ENCODE measurements at regions of chr19 and their contacts with region 1.

Region 1: DNA sequence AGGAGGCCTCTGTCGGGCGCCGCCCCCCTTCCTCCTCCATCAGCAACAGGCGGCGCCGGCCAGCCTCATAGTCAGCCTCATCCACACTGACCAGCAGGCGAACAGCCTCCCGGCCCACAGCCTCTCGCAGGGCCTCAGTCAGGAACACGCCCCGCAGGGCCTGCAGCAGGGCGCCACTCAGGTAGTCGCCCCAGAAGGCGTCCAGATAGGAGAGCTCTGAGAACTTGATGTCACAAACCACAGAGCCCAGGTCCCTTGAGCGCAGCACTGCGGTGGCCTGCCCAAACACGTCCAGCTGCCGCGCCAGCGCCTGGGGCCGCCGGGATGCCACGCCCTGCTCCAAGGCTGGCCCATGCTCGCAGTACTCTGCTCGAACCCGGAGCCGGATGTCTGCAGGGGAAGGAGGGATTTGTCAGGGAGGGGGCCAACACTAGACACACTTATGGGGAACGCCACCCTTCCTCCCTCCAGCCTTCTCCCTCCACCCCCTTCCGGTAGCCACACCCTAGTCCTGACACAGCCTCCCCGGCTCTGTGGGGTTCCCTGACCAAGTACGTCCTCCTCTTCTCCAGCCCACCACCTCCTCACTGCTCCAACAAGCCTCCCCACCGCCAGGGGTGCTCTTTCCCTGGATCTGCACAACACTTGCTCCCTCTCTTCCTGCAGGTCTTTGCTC is 17.9 kb downstream of the DEDD2 start:
- DNase-seq: peak in 10 of 14 experiments; percentile 28 to 89 (median 56)
- ATAC-seq: peak; percentile 47
- H3K4me3 ChIP-seq: peak overlapping the region; percentile 57
- H3K4me3 Mint-ChIP-seq: peak overlapping the region; percentile 83
- H3K27ac ChIP-seq: peak overlapping the region; percentile 89 to 94
- H3K27ac Mint-ChIP-seq: peak overlapping the region; percentile 93
- H3K4me1 ChIP-seq: peaks cover 95% of the 10 kb centered on the region
- H3K4me1 Mint-ChIP-seq: peaks cover 83% of the 10 kb centered on the region
- H3K27me3 ChIP-seq: no peaks in the 10 kb centered on the region
- H3K27me3 Mint-ChIP-seq: no peaks in the 10 kb centered on the region
- CTCF ChIP-seq: peak; percentile 10

Region 2: GRCh38 chr19:42176990-42177685 is 22.4 kb before region 1 on chr19:
- CTCF ChIA-PET with region 1: interaction called, 9 read pairs
- POLR2A ChIA-PET with region 1: interaction called, 19 read pairs
- intact Hi-C with region 1: no loop called
- DNase-seq: peak; percentile 61 to 91 (median 72)
- ATAC-seq: peak; percentile 95
- H3K4me3 ChIP-seq: peak overlapping the region; percentile 56
- H3K4me3 Mint-ChIP-seq: no peak overlapping the region
- H3K27ac ChIP-seq: no peak overlapping the region
- H3K27ac Mint-ChIP-seq: no peak overlapping the region
- H3K4me1 ChIP-seq: peaks cover 34% of the 10 kb centered on the region
- H3K4me1 Mint-ChIP-seq: peaks cover 25% of the 10 kb centered on the region
- H3K27me3 ChIP-seq: peaks cover 36 to 37% of the 10 kb centered on the region in 2 experiments
- H3K27me3 Mint-ChIP-seq: peaks cover 35% of the 10 kb centered on the region
- CTCF ChIP-seq: peak; percentile 35

Region 3: DNA sequence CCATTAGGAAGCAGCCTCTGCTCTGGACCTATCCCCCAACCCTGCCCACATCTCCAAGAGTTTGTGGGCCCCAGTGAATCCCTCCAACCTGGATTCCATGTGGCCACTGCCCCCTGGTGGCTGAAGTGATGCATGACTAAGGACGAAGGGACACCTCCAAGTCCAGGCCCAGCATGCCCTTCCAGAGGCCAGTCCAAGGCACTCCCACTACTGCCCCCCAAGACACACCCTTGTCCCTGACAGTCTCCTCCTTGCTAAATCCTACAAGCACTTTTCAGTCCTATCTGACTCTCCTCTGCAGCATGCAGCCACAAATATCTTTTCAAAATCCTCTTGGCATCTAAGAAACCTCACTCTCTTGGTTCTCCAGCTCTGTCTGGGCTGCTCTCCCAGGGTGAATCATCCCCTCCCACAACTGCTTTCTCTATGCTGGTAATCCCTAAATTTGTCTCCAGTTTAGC is 15.1 kb before region 1 on chr19:
- CTCF ChIA-PET with region 1: interaction called, 3 read pairs
- POLR2A ChIA-PET with region 1: interaction called, 18 read pairs
- intact Hi-C with region 1: loop called in 1 of 2 experiments (anchors 2 kb)
- DNase-seq: peak; percentile 51 to 82 (median 62)
- ATAC-seq: peak; percentile 62
- H3K4me3 ChIP-seq: no peak overlapping the region
- H3K4me3 Mint-ChIP-seq: peak overlapping the region; percentile 6
- H3K27ac ChIP-seq: no peak overlapping the region
- H3K27ac Mint-ChIP-seq: no peak overlapping the region
- H3K4me1 ChIP-seq: peaks cover 56% of the 10 kb centered on the region
- H3K4me1 Mint-ChIP-seq: peaks cover 53% of the 10 kb centered on the region
- H3K27me3 ChIP-seq: peaks cover 6% of the 10 kb centered on the region in 2 experiments
- H3K27me3 Mint-ChIP-seq: peaks cover 9% of the 10 kb centered on the region
- CTCF ChIP-seq: peak; percentile 90

Region 4: DNA sequence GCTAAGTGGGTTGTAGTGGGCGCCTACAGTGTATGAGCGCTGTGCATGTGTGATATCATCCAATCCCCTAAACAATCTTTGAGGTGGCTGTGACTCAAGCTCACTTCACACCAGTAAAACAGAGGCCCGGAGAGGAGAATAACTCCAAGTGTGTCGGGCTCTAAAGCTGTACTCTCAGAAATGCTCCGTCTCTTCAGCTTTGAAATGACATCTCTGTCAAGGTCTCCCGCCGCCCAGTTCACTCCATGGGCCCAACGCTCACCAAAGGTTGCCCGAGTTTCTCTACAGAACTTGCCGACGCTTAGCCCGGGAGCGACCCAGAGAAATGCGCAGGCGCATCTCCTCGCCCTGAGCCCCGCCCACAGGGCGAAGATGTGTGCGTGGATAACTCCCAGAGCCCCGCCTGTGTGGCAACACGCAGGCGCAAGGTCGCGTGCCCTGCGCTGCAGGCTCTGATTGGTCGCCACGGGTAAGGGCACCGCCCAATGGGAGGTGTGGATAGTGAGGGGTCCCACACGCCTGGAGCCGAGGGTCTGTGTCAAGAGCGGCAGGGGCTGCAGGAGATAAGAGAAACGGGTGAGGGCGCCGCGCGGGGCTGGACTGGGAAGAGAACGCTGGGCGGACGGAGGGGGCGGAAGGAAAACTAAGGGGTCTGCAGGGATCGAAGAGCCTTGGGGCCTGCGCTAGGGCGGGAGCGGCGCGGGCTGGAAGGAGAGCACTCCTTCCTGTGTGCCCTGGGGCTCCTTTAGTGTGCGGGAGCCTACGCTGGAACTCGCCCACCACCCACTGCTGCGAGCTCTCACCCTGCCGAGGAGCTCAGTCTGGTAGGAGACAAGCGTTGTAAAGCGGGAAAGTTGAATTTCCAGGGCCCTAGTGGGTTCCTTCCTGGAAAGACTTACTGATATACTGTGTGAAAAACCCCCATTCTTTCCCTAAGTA is 20.5 kb after region 1 on chr19 and contains the start of gene ZNF526:
- CTCF ChIA-PET with region 1: interaction called, 5 read pairs
- POLR2A ChIA-PET with region 1: interaction called, 70 read pairs
- intact Hi-C with region 1: loop called (anchors 1 to 2 kb)
- DNase-seq: peak; percentile 93 to 99 (median 96)
- ATAC-seq: peak; percentile 80
- H3K4me3 ChIP-seq: peak within 1 kb of the TSS; percentile 98
- H3K4me3 Mint-ChIP-seq: peak within 1 kb of the TSS; percentile 96
- H3K27ac ChIP-seq: peak within 1 kb of the TSS; percentile 70 to 78
- H3K27ac Mint-ChIP-seq: peak within 1 kb of the TSS; percentile 93
- H3K4me1 ChIP-seq: peaks cover 64% of the 10 kb centered on the region
- H3K4me1 Mint-ChIP-seq: peaks cover 58% of the 10 kb centered on the region
- H3K27me3 ChIP-seq: no peaks in the 10 kb centered on the region
- H3K27me3 Mint-ChIP-seq: no peaks in the 10 kb centered on the region
- CTCF ChIP-seq: no peak
- total RNA-seq, gene ZNF526: 5.0 to 6.2 TPM

Region 5: DNA sequence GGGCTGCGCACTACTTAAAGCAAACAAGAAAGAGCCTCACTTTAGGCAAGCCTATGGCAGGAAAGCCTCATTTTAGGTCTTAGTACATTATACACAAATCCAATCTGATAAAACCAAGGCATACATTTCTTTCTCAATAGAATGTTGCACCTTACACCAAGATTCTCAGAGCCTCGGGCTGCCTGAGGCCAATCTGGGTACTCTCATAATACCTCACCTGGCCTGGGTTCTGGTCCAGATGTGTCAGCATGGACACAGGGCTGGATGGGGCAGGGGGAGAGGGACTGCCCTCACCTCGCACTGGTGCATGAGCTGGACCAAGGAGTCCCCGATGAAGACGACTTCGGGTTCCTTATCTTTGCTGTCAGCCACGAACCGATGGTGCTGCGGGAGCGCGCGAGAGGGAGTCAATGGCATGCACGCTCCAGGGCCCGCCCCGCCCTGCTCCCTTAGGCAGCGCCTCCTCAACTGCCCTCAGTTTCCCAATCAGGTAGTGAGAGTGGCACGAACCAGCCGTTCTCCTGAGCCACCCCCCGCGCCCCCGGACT is 102.2 kb after region 1 on chr19 and contains the start of gene PRR19:
- CTCF ChIA-PET with region 1: no interaction called
- POLR2A ChIA-PET with region 1: interaction called, 3 read pairs
- intact Hi-C with region 1: loop called in 1 of 2 experiments (anchors 5 kb)
- DNase-seq: peak in 3 of 14 experiments; percentile 33 to 52 (median 46)
- ATAC-seq: peak; percentile 15
- H3K4me3 ChIP-seq: peak within 1 kb of the TSS; percentile 91
- H3K4me3 Mint-ChIP-seq: peak within 1 kb of the TSS; percentile 88
- H3K27ac ChIP-seq: peak within 1 kb of the TSS; percentile 29 to 58
- H3K27ac Mint-ChIP-seq: peak within 1 kb of the TSS; percentile 66
- H3K4me1 ChIP-seq: peaks cover 28% of the 10 kb centered on the region
- H3K4me1 Mint-ChIP-seq: peaks cover 26% of the 10 kb centered on the region
- H3K27me3 ChIP-seq: no peaks in the 10 kb centered on the region
- H3K27me3 Mint-ChIP-seq: no peaks in the 10 kb centered on the region
- CTCF ChIP-seq: no peak
- total RNA-seq, gene PRR19: 0.16 TPM in 1 of 2 experiments, not detected in the other

Measured in CD4-positive, alpha-beta T cell (primary cell).